Activated naive CD4-positive, alpha-beta T cell treated with anti-CD3 and anti-CD28 coated beads, Interleukin-2, amount 10 ng/mL, durations not matched to agents 7 days and 5 days (primary cell): ENCODE measurements at regions of chr15 and their contacts with region 1.

Region 1: DNA sequence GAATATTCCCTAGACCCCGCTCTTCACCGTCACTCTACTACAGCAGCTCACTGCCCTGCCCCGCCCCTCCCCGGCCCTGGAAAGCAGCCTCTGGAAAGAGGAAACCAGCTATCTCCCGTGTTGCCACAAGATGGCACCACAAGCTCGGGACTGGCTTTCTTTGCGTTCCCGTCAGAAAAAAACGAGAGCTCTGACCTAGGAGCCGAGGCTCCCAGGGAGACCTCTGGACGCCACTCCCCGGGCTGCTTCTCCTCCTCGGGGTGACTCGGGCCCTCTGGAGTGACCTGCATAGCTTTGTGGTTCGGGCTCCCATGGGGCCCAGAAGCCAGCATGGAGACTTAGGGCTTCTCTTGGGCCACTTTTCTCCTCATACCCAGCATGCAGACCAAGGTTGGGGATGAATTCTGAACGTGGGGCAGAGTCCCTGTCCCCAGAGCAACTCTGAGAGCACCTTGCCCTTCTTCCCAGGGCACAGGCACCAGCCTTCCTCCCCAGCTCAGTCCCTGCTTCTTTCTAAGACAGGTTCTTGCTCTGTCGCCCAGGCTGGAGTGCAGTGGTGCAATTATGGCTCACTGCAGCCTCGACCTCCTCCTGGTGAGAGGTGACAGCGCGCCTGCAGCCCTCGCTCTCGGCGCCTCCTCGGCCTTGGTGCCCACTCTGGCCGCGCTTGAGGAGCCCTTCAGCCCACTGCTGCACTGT is 19.0 kb downstream of the STOML1 start:
- DNase-seq: peak; percentile 88
- H3K4me3 Mint-ChIP-seq: no peak overlapping the region
- H3K27ac Mint-ChIP-seq: no peak overlapping the region
- H3K4me1 Mint-ChIP-seq: peaks cover 45% of the 10 kb centered on the region
- H3K27me3 Mint-ChIP-seq: peaks cover 33% of the 10 kb centered on the region

Region 2: GRCh38 chr15:73950831-73951561 is 22.1 kb before region 1 on chr15:
- CTCF ChIA-PET with region 1: interaction called, 11 read pairs
- DNase-seq: peak; percentile 87
- H3K4me3 Mint-ChIP-seq: no peak overlapping the region
- H3K27ac Mint-ChIP-seq: no peak overlapping the region
- H3K4me1 Mint-ChIP-seq: peaks cover 15% of the 10 kb centered on the region
- H3K27me3 Mint-ChIP-seq: peaks cover 49% of the 10 kb centered on the region

Region 3: DNA sequence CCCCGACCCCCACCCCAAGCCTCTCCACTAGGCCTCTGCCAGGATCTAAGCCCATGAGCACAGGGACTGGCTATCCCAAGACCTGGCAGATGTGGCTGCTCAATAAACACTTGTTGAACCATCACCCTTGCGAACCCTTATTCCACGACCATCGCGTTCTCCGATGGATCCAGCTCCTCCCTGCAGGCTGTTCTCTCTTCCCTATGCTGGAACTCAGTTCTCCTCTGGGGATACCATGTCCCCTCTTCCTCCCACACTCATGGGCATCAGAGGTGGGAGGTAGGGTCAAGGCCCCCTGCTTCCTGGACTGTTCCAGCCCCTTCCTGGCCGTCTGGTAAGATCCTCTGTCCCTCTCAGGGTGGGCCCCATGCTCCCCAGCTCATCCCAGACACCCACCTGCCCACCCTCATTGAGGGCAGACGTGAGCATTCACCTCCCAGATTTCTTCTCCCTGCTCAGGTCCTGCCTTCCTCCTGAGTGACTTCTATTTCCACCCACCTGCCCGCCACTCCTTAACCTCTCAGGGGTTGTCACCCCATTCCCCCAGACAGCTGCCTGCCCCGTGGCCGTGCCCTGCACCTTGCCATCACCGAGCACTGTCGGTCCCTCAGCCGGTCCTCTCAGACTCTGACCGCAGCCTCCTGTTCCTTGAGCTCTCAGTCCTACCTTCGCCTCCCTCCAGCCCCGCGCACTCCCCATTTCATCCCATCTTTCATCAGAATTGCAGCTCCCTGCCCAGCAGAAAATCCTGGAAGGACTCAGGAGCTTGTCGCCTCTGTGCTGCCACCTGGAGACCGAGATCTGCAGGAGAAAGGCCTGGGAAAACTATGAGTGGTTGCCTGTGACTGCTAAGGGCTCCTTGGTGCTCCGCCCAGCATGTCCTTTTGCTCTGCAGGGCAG is 63.4 kb after region 1 on chr15:
- CTCF ChIA-PET with region 1: interaction called, 12 read pairs
- DNase-seq: no peak
- H3K4me3 Mint-ChIP-seq: no peak overlapping the region
- H3K27ac Mint-ChIP-seq: no peak overlapping the region
- H3K4me1 Mint-ChIP-seq: no peaks in the 10 kb centered on the region
- H3K27me3 Mint-ChIP-seq: no peaks in the 10 kb centered on the region

Region 4: DNA sequence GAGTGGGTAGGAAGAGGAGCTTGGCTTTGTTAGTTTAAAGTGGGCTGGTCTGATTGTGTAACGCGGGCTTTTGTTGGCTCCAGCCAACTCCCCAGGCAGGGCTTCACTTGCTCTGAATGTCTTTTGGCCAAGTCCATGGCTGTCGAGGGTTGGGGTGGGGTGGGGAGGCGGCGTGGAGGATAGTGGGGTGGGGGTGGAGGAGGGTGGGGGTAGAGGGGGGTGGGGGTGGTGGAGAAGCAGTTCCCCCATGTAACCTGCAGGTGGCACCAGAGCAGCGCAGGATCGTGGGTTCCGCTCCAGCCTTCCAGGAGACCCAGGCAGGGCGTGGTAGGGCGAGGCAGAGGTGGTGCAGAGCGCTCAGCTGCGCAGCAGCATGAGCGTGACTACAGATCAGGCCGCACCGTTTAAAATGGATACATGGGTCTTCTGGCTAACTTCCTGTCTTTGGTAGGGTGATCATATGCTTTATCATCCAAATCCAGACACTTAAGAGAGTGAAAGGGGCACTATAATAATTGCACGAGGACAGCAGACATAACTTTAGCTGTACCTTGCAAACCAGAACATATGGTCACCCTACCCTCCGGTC is 80.9 kb after region 1 on chr15:
- CTCF ChIA-PET with region 1: interaction called, 32 read pairs
- DNase-seq: peak; percentile 83
- H3K4me3 Mint-ChIP-seq: no peak overlapping the region
- H3K27ac Mint-ChIP-seq: no peak overlapping the region
- H3K4me1 Mint-ChIP-seq: peaks cover 15% of the 10 kb centered on the region
- H3K27me3 Mint-ChIP-seq: peaks cover 4% of the 10 kb centered on the region

Region 5: GRCh38 chr15:74322181-74323076 is 349.3 kb after region 1 on chr15:
- CTCF ChIA-PET with region 1: interaction called, 37 read pairs
- DNase-seq: peak; percentile 75
- H3K4me3 Mint-ChIP-seq: no peak overlapping the region
- H3K27ac Mint-ChIP-seq: no peak overlapping the region
- H3K4me1 Mint-ChIP-seq: peaks cover 20% of the 10 kb centered on the region
- H3K27me3 Mint-ChIP-seq: peaks cover 15% of the 10 kb centered on the region

Region 6: DNA sequence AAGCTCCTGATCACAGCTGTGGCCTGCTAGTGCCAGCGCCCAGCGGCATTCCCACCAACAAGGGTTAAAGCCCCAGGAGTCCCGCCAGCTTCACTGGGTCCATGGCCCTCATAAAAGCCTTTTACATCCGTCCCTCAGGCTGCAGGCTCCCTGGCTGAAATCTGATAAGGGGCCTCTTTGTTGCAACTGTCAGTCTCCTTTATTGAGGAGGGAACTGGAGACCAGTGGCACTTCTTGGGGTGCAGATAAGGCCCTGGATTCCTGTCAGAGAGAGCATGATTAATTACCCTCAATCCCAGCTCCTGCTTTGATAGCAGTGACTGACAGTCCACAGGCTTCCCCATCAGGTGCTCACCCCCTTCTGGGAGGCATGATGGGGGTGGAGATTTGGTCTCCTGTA is 611.6 kb after region 1 on chr15:
- CTCF ChIA-PET with region 1: no interaction called
- DNase-seq: no peak
- H3K4me3 Mint-ChIP-seq: no peak overlapping the region
- H3K27ac Mint-ChIP-seq: peak overlapping the region; percentile 20
- H3K4me1 Mint-ChIP-seq: peaks cover 5% of the 10 kb centered on the region
- H3K27me3 Mint-ChIP-seq: no peaks in the 10 kb centered on the region